HEK293 (cell line): ENCODE measurements at regions of chr11 and their contacts with region 1.

Region 1: DNA sequence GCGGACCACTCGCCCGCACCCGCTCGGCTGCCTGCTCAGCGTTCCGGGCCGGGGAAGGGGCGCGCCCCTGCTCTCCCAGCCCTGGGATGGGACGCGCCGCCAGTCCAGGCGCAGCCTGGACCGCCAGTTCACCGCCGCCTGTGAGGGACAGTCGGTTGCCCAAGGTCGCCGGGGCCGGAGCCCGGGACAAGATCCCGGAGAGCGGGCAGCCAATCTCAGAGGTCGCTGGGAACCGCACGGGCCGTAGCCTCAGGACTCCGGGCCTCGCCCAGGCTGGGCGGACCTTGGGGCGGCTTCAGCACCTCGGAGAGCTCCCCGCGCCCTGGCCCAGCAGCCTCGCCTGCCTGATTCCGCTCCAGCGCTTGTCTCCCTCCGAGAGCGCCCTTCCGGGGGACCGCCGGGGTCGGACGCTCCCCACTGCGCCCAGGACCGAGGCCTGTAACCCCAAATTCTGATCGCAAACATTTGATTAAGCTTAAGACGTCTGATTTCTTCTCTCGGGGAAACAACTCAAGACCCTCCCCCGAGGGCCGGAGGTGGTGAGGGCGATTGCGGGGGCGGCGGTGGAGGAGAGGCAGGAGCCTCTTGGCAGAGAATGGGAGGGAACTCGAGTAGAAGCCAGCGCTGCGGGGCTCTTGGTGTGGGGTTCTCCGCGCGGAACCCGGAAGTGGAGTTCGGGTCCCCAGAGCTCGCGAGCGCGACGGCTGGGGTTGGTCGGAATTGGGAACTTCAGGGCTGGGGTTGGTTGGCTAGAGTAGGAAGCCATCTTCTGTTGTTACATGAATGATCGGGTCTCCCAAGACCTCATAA is 1.1 kb upstream of the CHRM4 start:
- H3K4me3 ChIP-seq: peak overlapping the region; percentile 45
- H3K27ac ChIP-seq: no peak overlapping the region
- H3K4me1 ChIP-seq: no peaks in the 10 kb centered on the region
- CTCF ChIP-seq: no peak

Region 2: DNA sequence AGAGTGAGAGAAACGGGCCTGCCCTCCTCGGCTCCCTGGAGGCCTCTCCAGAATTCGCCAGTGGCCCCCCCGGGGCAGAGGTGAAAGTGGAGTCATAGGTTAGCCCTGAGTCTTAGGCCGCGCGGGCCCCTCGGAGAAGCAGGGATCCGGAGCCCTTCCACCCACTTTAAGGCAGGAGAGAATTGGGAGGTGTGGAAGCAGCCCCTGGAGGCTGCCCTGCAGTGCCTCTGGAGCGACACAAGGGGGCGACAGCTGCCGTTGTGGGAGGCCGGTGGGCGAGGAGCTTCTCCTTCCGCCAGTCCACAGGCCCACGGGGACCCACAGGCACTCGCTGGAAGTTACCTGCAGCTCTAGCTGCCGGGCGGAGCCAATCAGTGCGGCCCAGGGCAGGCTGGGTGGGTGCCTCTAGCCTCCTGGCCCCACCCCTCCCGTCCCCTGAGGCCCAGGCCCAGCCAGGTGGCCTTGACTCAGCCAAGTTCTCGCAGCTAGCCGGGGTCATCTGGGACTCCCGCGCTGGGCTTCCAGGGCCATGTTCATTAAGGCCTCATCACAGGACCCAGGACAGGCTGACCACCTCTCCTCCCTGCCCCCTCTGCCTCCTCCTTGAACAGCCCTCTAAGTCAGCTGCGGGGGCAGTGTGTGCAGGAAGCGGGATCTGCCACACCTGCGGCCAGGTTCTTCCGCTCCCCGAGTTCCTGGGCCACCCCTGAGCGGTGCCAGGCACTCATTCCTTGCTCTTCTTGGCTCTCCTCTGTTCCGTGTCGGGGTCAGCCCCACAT is 40.4 kb before region 1 on chr11:
- CTCF ChIA-PET with region 1: interaction called, 43 read pairs
- POLR2A ChIA-PET with region 1: interaction called, 5 read pairs
- H3K4me3 ChIP-seq: no peak overlapping the region
- H3K27ac ChIP-seq: no peak overlapping the region
- H3K4me1 ChIP-seq: no peaks in the 10 kb centered on the region; the same call in 1 of the 2 replicates
- CTCF ChIP-seq: peak; percentile 70

Region 3: GRCh38 chr11:46367244-46367915 is 25.2 kb before region 1 on chr11:
- CTCF ChIA-PET with region 1: interaction called, 10 read pairs
- POLR2A ChIA-PET with region 1: no interaction called
- H3K4me3 ChIP-seq: no peak overlapping the region
- H3K27ac ChIP-seq: no peak overlapping the region
- H3K4me1 ChIP-seq: no peaks in the 10 kb centered on the region
- CTCF ChIP-seq: peak; percentile 67

Region 4: DNA sequence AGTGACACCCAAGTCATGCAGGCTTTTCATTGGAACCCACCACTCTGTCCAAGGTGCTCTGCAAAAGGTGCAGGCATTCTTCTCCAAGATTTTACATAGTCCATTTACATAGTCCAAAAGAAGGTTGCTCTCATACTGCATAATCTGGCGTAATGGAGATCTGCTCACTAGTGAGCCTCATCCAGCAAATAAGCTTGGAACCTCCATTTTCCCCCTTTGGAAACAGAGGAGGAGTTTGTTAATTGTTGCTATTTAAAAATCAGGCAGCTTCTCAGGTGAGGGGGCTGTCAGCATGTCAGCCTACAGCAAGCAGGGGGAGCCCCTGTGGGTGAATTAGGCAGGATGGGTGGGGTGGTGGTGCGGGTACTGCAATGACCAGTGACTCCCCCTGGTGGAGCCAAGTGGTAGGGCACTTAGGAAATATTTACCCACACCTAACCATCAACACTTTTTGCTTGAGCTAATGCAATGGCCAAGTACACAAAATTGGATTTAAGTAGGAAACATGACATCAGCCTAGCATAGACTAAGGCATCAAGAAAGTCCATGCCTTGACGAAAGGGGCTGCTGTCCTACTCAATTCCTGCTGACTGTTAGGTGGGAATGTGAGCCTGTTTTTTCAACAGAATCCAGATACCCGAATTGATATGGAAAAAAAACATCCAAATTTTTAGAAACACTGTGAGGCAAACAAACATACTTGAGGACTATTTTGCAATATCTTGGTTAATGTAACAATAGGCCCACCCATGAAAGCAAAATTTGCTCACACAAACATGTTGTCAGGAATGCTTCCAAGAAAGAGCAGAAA is 136.7 kb after region 1 on chr11:
- CTCF ChIA-PET with region 1: interaction called, 56 read pairs
- POLR2A ChIA-PET with region 1: no interaction called
- H3K4me3 ChIP-seq: no peak overlapping the region
- H3K27ac ChIP-seq: no peak overlapping the region
- H3K4me1 ChIP-seq: no peaks in the 10 kb centered on the region
- CTCF ChIP-seq: peak; percentile 56; the same call in 1 of the 2 replicates

Region 5: GRCh38 chr11:46537537-46538295 is 145.1 kb after region 1 on chr11:
- CTCF ChIA-PET with region 1: interaction called, 56 read pairs
- POLR2A ChIA-PET with region 1: no interaction called
- H3K4me3 ChIP-seq: no peak overlapping the region
- H3K27ac ChIP-seq: no peak overlapping the region
- H3K4me1 ChIP-seq: no peaks in the 10 kb centered on the region
- CTCF ChIP-seq: peak; percentile 65

Region 6: DNA sequence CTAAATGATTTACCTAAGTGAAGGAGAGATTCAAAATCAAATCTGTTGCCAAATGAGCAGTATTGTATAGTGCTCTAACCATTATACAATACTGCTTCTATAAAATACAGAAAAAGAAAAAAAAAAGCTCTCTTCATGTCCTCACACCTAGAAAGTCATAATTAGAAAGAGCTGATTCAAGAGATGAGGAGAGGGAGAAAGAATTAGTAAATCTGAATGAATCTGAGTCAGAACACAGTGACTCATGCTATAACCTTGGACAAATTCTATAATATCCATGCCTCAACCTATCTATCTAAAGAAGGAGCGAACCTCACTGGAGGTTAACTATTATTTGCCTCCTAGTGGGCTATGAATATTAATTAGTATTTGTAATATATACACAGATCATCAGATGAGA is 171.8 kb after region 1 on chr11:
- CTCF ChIA-PET with region 1: no interaction called
- POLR2A ChIA-PET with region 1: no interaction called
- H3K4me3 ChIP-seq: no peak overlapping the region
- H3K27ac ChIP-seq: no peak overlapping the region
- H3K4me1 ChIP-seq: peaks cover 6% of the 10 kb centered on the region; the same call in 1 of the 2 replicates
- CTCF ChIP-seq: no peak